ENCODE measurements at regions of chr20 and their contacts with region 1.

Region 1: GRCh38 chr20:43994486-43995100 is 79.9 kb downstream of the TOX2 start:
- DNase-seq: no peak
- H3K4me3 ChIP-seq: no peak overlapping the region
- H3K4me3 Mint-ChIP-seq: no peak overlapping the region
- H3K27ac ChIP-seq: no peak overlapping the region
- H3K27ac Mint-ChIP-seq: no peak overlapping the region
- H3K4me1 ChIP-seq: no peaks in the 10 kb centered on the region
- H3K4me1 Mint-ChIP-seq: no peaks in the 10 kb centered on the region
- H3K27me3 ChIP-seq: no peaks in the 10 kb centered on the region
- H3K27me3 Mint-ChIP-seq: peaks cover 9 to 19% (median 12%) of the 10 kb centered on the region in 3 donors
- CTCF ChIP-seq: no peak

Region 2: DNA sequence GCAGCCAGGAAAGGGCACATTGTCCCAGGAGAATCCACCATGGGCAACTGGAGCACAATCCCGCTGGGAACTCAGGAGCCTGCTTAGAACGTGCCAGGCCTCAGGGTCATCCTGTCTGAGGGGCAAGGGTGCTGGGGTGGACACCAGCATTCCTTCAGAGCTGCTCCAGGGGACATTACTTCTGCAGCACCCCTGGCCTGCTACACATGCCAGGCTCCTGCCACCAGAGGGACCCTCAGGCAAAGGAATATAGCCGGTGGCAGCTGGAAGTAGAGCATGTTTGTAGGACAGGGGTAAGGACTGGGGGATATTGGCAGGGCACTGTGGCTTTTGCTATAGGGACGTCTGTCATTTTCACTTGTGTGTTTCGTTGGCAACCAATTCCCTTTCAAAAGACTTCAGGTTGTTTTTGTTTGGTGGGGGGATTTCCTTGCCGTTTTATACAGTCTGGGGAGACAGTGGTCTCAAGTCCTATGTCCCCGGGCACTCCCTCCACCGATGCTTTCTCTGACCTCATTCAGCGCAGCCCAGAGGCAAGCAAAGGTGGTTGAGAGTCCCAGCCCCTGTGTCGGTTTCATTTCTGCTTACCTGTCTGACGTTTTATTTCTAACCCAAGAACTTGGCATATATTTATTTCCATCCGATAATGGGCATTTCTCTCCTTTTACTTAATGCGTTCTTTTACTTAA is 61.6 kb after region 1 on chr20:
- intact Hi-C with region 1: loop called in 1 of 2 experiments (anchors 10 kb)
- DNase-seq: peak; percentile 61 to 70 (median 67)
- H3K4me3 ChIP-seq: no peak overlapping the region
- H3K4me3 Mint-ChIP-seq: no peak overlapping the region
- H3K27ac ChIP-seq: no peak overlapping the region
- H3K27ac Mint-ChIP-seq: no peak overlapping the region
- H3K4me1 ChIP-seq: no peaks in the 10 kb centered on the region
- H3K4me1 Mint-ChIP-seq: peaks cover 1% of the 10 kb centered on the region
- H3K27me3 ChIP-seq: no peaks in the 10 kb centered on the region
- H3K27me3 Mint-ChIP-seq: peaks cover 4 to 9% (median 9%) of the 10 kb centered on the region in 3 donors
- CTCF ChIP-seq: peak; percentile 78